Activated CD4-positive, alpha-beta memory T cell treated with anti-CD3 and anti-CD28 coated beads for 36 hours (primary cell): ENCODE measurements at regions of chr13 and their contacts with region 1.

Region 1: DNA sequence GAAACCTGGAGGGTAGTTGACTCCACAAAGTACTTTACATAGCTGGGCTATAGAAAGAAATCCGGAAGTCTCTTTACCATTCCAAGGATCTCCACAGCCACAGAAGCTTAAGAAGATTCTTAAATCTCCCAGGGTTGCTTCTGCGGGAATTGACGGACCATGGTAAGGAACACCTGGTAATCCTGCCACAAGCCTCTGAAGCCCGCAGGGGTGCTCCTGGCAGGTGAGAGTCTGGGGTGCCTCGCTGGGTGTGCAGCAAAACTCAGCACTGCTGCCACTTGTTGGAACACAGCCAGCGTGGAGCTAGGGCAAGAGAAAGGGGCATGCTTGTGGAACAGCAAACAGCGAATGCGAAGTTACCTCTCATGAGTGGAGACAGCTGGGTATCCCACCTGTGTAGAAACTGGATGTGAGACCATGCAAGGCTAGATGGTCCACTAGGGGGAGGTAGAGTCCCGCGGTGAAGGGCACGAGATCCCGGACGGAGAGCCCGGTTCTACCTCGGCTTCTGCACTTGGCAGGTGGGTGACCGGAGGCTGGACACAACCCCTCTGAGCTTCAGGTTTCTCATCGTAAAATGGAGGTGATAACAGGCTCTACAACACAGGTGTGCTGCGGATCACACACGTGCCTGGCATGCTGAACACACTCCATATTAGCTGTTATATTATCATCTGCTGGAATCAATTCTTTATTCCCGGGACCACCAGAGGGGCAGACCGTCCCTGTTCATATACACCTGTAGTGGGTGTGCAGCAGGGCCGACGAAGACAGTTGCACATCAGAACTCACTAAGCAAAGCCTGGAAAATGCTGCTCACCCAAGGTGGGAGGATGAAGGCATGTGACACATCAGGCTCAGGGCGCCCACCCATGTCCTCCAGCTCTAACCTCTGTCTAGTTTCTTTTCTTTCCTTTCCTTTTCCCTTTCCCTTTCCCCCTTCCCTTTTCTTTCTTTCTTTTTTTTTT is 24.1 kb upstream of the UBAC2 start:
- DNase-seq: peak; percentile 84
- H3K4me3 Mint-ChIP-seq: peak overlapping the region; percentile 45
- H3K27ac Mint-ChIP-seq: no peak overlapping the region
- H3K4me1 Mint-ChIP-seq: peaks cover 25% of the 10 kb centered on the region
- H3K27me3 Mint-ChIP-seq: peaks cover 3% of the 10 kb centered on the region

Region 2: GRCh38 chr13:98970330-98970729 is 206.3 kb before region 1 on chr13:
- CTCF ChIA-PET with region 1: no interaction called
- POLR2A ChIA-PET with region 1: no interaction called
- intact Hi-C with region 1: no loop called
- DNase-seq: no peak
- H3K4me3 Mint-ChIP-seq: no peak overlapping the region
- H3K27ac Mint-ChIP-seq: no peak overlapping the region
- H3K4me1 Mint-ChIP-seq: peaks cover 33% of the 10 kb centered on the region
- H3K27me3 Mint-ChIP-seq: no peaks in the 10 kb centered on the region

Region 3: GRCh38 chr13:99033814-99034213 is 142.8 kb before region 1 on chr13:
- CTCF ChIA-PET with region 1: interaction called, 11 read pairs
- POLR2A ChIA-PET with region 1: no interaction called
- intact Hi-C with region 1: no loop called
- DNase-seq: no peak
- H3K4me3 Mint-ChIP-seq: no peak overlapping the region
- H3K27ac Mint-ChIP-seq: no peak overlapping the region
- H3K4me1 Mint-ChIP-seq: peaks cover 57% of the 10 kb centered on the region
- H3K27me3 Mint-ChIP-seq: no peaks in the 10 kb centered on the region

Region 4: DNA sequence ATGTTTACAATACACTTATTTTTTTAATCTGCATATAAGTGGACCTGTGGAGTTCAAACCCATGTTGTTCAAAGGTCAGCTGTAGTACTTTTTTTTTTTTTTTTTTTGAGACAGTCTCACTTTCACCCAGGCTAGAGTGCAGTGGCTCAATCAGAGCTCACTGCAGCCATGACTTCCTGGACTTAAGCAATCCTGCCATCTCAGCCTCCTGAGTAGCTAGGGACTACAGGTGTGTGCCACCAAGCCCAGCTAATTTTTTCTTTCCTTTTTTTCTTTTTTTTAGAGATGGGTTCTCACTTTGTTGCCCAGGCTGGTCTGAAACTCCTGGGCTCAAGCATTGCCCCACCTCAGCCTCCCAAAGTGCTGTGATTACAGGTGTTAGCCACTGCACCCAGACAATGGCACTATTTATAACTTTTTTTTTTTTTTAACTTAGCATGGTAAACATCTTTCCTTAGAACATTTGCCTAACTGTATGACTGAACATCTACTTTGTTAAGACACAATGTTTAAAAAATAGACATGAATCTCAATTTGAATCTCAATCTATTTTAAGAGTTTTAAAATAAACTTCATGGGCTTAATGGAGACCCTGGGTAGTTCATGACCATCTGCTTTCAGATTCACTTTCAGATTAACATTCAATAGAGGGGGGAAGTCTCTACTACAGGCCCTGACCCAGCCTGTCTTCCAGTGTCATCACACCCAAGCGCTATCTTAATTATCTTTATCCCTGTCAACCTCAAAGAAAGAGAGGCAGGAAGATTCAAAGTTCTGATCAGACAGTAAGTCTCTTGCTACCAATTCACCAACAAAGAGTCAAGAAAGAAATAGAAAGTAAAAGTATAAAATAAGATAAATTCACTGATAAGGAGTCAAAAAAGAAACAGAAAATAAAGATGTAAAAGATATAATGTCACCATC is 101.1 kb before region 1 on chr13:
- CTCF ChIA-PET with region 1: no interaction called
- POLR2A ChIA-PET with region 1: no interaction called
- intact Hi-C with region 1: no loop called
- DNase-seq: no peak
- H3K4me3 Mint-ChIP-seq: peak overlapping the region; percentile 47
- H3K27ac Mint-ChIP-seq: peak overlapping the region; percentile 87
- H3K4me1 Mint-ChIP-seq: peaks cover 70% of the 10 kb centered on the region
- H3K27me3 Mint-ChIP-seq: no peaks in the 10 kb centered on the region

Region 5: DNA sequence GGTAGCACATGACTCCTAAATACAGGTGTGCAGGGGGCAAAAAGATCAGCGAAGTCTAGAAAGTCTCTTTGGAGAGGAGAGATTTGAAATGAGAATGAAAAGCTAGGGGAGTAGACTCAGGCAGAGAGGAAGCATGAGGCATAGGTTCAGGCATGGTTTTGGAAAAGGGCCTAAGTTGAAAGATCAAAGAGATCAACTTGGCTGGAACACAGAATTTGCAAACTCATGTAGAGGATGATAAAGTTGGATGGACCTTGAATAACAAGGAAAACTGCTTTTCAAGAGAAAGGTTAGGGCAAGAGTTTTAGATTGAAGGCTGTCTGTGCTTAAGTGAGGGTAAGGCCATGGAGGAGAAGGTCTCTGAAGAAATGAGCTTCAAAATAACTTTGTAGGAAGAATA is 23.4 kb before region 1 on chr13:
- CTCF ChIA-PET with region 1: interaction called, 11 read pairs
- POLR2A ChIA-PET with region 1: no interaction called
- intact Hi-C with region 1: no loop called
- DNase-seq: no peak
- H3K4me3 Mint-ChIP-seq: no peak overlapping the region
- H3K27ac Mint-ChIP-seq: no peak overlapping the region
- H3K4me1 Mint-ChIP-seq: peaks cover 11% of the 10 kb centered on the region
- H3K27me3 Mint-ChIP-seq: no peaks in the 10 kb centered on the region

Region 6: GRCh38 chr13:99228737-99229691 is 52.4 kb after region 1 on chr13:
- CTCF ChIA-PET with region 1: interaction called, 19 read pairs
- POLR2A ChIA-PET with region 1: no interaction called
- intact Hi-C with region 1: no loop called
- DNase-seq: no peak
- H3K4me3 Mint-ChIP-seq: peak overlapping the region; percentile 64
- H3K27ac Mint-ChIP-seq: peak overlapping the region; percentile 68
- H3K4me1 Mint-ChIP-seq: peaks cover 71% of the 10 kb centered on the region
- H3K27me3 Mint-ChIP-seq: no peaks in the 10 kb centered on the region

Region 7: DNA sequence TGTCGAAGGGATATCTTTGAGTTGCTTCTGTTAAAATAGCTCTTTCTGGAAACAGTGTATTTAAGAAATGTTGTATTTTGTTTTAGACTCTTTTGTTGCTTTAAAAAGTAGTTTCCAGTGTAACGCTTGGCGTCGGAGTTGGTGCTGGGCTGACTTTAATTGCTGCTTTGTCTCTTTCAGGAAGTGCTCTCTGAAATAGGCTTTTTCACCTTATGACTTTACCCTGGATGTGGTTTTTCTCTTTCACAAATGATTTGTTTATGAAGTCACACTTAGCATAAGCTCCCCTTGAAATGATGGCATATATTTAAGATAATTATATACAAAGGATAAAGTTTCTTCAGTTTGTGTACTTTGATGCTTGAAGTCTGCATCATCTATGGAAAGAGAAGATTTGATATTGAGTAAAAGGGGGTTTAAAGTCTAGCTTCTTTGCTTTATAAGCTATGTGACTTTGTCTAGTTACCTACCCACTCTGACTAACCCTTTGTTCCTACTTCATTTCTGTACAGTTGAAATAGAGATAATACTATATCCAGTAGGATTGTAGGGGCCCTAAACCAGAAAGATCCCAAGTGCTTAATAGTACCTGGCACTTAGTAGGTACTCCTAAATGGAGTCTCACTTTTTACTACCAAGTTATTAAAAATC is 81.7 kb after region 1 on chr13 and contains the start of gene GPR18:
- CTCF ChIA-PET with region 1: interaction called, 38 read pairs
- POLR2A ChIA-PET with region 1: no interaction called
- intact Hi-C with region 1: no loop called
- DNase-seq: peak; percentile 57
- H3K4me3 Mint-ChIP-seq: peak within 1 kb of the TSS; percentile 77
- H3K27ac Mint-ChIP-seq: peak within 1 kb of the TSS; percentile 90
- H3K4me1 Mint-ChIP-seq: peaks cover 76% of the 10 kb centered on the region
- H3K27me3 Mint-ChIP-seq: no peaks in the 10 kb centered on the region
- total RNA-seq, gene GPR18: 2.4 to 2.8 TPM

Region 8: GRCh38 chr13:99288089-99288488 is 111.5 kb after region 1 on chr13:
- CTCF ChIA-PET with region 1: interaction called, 10 read pairs
- POLR2A ChIA-PET with region 1: no interaction called
- intact Hi-C with region 1: no loop called
- DNase-seq: peak; percentile 87
- H3K4me3 Mint-ChIP-seq: no peak overlapping the region
- H3K27ac Mint-ChIP-seq: peak overlapping the region; percentile 80
- H3K4me1 Mint-ChIP-seq: peaks cover 85% of the 10 kb centered on the region
- H3K27me3 Mint-ChIP-seq: no peaks in the 10 kb centered on the region

Region 9: GRCh38 chr13:99380921-99381645 is 204.5 kb after region 1 on chr13:
- CTCF ChIA-PET with region 1: interaction called, 9 read pairs
- POLR2A ChIA-PET with region 1: no interaction called
- intact Hi-C with region 1: loop called (anchors 2 kb)
- DNase-seq: peak; percentile 87
- H3K4me3 Mint-ChIP-seq: peak overlapping the region; percentile 36
- H3K27ac Mint-ChIP-seq: peak overlapping the region; percentile 89
- H3K4me1 Mint-ChIP-seq: peaks cover 84% of the 10 kb centered on the region
- H3K27me3 Mint-ChIP-seq: no peaks in the 10 kb centered on the region